Tibial artery (tissue), 4 donors: ENCODE measurements at regions of chr16 and their contacts with region 1.

Region 1: GRCh38 chr16:6643080-6643686 is 689.5 kb upstream of the RBFOX1 start:
- DNase-seq: peak in 1 of 2 donors; percentile 55
- H3K4me3 ChIP-seq: no peak overlapping the region
- H3K27ac ChIP-seq: no peak overlapping the region
- H3K4me1 ChIP-seq: no peaks in the 10 kb centered on the region
- H3K27me3 ChIP-seq: peaks cover 0 to 17% of the 10 kb centered on the region in 2 donors
- CTCF ChIP-seq: peak; percentile 73 to 80

Region 2: DNA sequence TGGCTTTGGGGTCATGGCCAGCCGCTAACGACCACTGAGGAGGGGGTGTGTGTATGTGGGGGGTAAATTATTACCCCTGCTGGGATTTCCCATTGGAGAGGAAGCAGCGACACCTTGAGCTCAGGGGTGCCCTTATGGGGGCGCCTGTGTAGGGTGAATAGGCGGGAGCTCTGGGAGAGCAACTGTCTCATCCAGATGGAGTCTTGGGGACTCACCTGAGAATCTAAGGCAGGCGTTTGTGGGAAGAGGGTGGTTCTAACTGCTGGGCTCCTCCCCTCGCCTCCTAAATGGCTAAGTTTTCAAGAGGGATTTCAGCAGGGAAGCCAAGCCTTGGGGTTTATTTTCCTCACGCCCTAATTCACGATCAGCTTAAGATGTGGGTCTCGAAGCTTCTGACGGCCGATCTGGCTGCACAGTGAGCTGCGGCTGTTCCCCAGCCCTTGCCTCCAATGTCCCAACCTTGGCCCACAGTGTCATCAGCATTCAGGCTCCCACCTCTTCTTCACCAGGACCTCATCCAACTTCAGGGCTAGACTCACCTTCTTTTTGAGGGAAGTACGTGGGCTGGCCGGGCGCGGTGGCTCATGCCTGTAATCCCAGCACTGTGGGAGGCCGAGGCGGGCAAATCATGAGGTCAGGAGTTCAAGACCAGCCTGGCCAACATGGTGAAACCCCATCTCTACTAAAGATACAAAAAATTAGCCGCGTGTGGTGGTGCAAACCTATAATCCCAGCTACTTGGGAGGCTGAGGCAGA is 1408.7 kb before region 1 on chr16:
- intact Hi-C with region 1: loop called (anchors 10 kb)
- DNase-seq: no peak
- H3K4me3 ChIP-seq: no peak overlapping the region
- H3K27ac ChIP-seq: no peak overlapping the region
- H3K4me1 ChIP-seq: no peaks in the 10 kb centered on the region
- H3K27me3 ChIP-seq: peaks cover 0 to 11% of the 10 kb centered on the region in 2 donors
- CTCF ChIP-seq: no peak

Region 3: GRCh38 chr16:6602405-6602804 is 40.8 kb before region 1 on chr16:
- intact Hi-C with region 1: no loop called
- DNase-seq: no peak
- H3K4me3 ChIP-seq: no peak overlapping the region
- H3K27ac ChIP-seq: no peak overlapping the region
- H3K4me1 ChIP-seq: no peaks in the 10 kb centered on the region
- H3K27me3 ChIP-seq: no peaks in the 10 kb centered on the region
- CTCF ChIP-seq: no peak